ENCODE measurements at regions of chr1 and their contacts with region 1.

Region 1: DNA sequence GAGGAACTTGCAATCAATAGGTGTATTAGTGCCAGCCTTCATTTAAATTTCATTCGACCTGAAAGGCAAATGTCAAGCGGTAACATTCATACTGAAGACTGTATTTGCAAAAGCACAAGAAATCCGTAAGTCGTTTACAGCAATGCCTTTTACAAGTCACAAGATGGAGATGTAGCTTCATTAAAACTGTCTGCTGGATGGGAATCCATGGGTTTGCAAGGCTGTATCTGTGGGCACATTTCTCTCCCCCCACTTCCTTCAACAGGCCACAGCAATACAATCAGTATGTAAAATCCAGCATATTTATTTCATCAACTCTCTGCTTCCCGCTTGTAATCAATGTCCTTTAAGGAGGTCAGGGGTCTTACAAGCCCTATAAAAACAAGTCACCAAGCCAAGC is 147.1 kb downstream of the SLC45A1 start:
- DNase-seq: no peak
- ATAC-seq: no peak
- H3K4me3 Mint-ChIP-seq: no peak overlapping the region
- H3K27ac Mint-ChIP-seq: no peak overlapping the region
- H3K4me1 Mint-ChIP-seq: peaks cover 55% of the 10 kb centered on the region
- H3K27me3 Mint-ChIP-seq: no peaks in the 10 kb centered on the region
- CTCF ChIP-seq: no peak

Region 2: DNA sequence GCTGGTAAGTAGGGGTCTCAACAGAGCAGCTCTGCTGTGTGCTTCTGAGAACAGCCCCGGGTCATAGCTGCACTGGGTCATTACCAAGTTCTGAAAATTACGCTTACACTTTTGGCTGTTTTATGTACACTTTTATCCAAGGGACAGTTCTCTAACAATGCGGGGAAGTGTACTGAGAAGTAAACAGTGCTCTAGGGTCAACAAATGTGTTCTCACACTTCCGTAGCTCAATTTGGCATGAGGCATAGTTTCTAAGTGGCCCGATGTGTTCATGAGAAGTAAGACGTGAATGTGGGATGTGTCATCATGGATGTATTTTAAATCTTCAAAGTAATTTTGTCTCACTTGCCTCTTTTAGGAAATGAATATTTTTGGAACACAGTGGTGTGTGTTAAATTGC is 704.8 kb before region 1 on chr1:
- CTCF ChIA-PET with region 1: no interaction called
- POLR2A ChIA-PET with region 1: no interaction called
- intact Hi-C with region 1: no loop called
- DNase-seq: no peak
- ATAC-seq: no peak
- H3K4me3 Mint-ChIP-seq: no peak overlapping the region
- H3K27ac Mint-ChIP-seq: no peak overlapping the region
- H3K4me1 Mint-ChIP-seq: no peaks in the 10 kb centered on the region
- H3K27me3 Mint-ChIP-seq: peaks cover under 1% of the 10 kb centered on the region
- CTCF ChIP-seq: no peak

Region 3: DNA sequence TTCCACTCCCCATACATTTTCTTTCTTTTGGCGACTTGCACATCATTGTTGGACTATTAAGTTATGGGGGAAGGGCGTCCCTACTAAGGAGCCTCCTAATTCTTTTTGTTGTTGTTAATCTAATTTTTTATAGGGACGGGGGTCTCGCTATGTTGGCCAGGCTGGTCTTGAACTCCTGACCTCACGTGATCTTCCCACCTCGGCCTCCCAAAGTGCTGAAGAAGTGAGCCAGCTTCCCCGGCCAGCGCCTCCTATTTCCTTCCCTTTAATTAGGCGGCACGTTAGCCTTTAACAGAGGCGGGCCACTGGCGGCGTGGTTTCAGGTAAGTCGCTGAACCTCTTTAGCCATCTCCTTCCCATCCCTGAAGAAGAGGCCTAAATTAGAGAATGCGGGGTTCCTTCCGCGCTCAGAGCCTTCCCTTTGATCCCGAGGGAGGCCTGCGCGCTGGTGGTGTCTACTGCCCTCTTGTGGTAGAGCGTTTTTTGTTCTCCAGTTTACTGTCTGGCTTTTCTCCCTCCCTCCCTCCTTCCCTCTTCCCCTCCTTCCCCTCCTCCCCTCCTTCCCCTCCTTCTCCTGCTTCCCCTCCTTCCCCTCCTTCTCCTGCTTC is 562.4 kb before region 1 on chr1:
- CTCF ChIA-PET with region 1: no interaction called
- POLR2A ChIA-PET with region 1: no interaction called
- intact Hi-C with region 1: no loop called
- DNase-seq: peak; percentile 42
- ATAC-seq: peak; percentile 82
- H3K4me3 Mint-ChIP-seq: peak overlapping the region; percentile 56
- H3K27ac Mint-ChIP-seq: no peak overlapping the region
- H3K4me1 Mint-ChIP-seq: peaks cover 4% of the 10 kb centered on the region
- H3K27me3 Mint-ChIP-seq: no peaks in the 10 kb centered on the region
- CTCF ChIP-seq: peak; percentile 54

Region 4: GRCh38 chr1:8439015-8439702 is 25.9 kb before region 1 on chr1:
- CTCF ChIA-PET with region 1: no interaction called
- POLR2A ChIA-PET with region 1: interaction called, 15 read pairs
- intact Hi-C with region 1: no loop called
- DNase-seq: peak; percentile 49
- ATAC-seq: peak; percentile 94
- H3K4me3 Mint-ChIP-seq: peak overlapping the region; percentile 26
- H3K27ac Mint-ChIP-seq: peak overlapping the region; percentile 90
- H3K4me1 Mint-ChIP-seq: peaks cover 53% of the 10 kb centered on the region
- H3K27me3 Mint-ChIP-seq: no peaks in the 10 kb centered on the region
- CTCF ChIP-seq: no peak

Region 5: GRCh38 chr1:8477983-8478362 is 13.0 kb after region 1 on chr1:
- CTCF ChIA-PET with region 1: no interaction called
- POLR2A ChIA-PET with region 1: interaction called, 4 read pairs
- intact Hi-C with region 1: loop called (anchors 2 kb)
- DNase-seq: no peak
- ATAC-seq: no peak
- H3K4me3 Mint-ChIP-seq: no peak overlapping the region
- H3K27ac Mint-ChIP-seq: no peak overlapping the region
- H3K4me1 Mint-ChIP-seq: peaks cover 35% of the 10 kb centered on the region
- H3K27me3 Mint-ChIP-seq: no peaks in the 10 kb centered on the region
- CTCF ChIP-seq: no peak

Region 6: GRCh38 chr1:8497210-8497801 is 32.3 kb after region 1 on chr1:
- CTCF ChIA-PET with region 1: no interaction called
- POLR2A ChIA-PET with region 1: no interaction called
- intact Hi-C with region 1: loop called (anchors 2 kb)
- DNase-seq: no peak
- ATAC-seq: peak; percentile 57
- H3K4me3 Mint-ChIP-seq: peak overlapping the region; percentile 46
- H3K27ac Mint-ChIP-seq: peak overlapping the region; percentile 93
- H3K4me1 Mint-ChIP-seq: peaks cover 63% of the 10 kb centered on the region
- H3K27me3 Mint-ChIP-seq: no peaks in the 10 kb centered on the region
- CTCF ChIP-seq: no peak

Region 7: DNA sequence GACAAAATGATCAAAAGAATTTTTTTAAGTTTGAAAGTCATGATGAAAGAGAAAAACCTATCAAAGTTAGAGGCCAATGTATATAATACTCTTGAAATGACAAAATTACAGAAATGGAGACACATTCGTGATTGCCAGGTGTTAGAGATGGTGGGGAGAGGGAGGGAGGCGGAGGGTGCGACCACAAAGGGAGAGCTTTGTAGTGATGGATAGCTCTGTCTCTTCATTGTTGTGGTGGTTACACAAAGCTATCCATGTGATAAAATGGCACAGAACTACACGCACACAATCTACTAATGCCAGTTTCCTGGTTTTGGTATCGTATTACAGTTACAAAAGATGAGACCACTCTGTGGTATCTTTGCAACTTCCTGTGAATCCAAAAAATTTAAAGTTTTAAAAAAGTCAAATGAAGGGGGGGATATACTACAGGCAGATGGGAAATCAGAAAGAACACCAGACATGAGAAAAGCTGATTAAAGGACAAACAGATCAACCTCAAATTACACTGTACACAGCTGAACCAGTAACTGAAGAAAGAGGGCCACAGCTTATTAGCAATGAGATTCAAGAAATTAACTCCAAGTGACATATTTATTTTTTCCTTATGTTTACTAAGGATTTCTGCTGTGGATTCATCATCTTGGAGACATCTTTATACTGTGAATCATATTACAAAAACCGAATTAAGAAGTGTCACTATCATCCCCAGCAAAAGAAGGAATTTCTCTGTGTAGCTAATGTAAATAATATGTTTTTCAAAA is 52.0 kb after region 1 on chr1:
- CTCF ChIA-PET with region 1: no interaction called
- POLR2A ChIA-PET with region 1: no interaction called
- intact Hi-C with region 1: no loop called
- DNase-seq: no peak
- ATAC-seq: no peak
- H3K4me3 Mint-ChIP-seq: peak overlapping the region; percentile 3
- H3K27ac Mint-ChIP-seq: peak overlapping the region; percentile 74
- H3K4me1 Mint-ChIP-seq: peaks cover 62% of the 10 kb centered on the region
- H3K27me3 Mint-ChIP-seq: no peaks in the 10 kb centered on the region
- CTCF ChIP-seq: no peak

Measured in activated B cell treated with CpG ODN at 0.5 μM for 24 hours (primary cell).